Esophagus muscularis mucosa (tissue), 4 donors: ENCODE measurements at regions of chr1 and their contacts with region 1.

Region 1: DNA sequence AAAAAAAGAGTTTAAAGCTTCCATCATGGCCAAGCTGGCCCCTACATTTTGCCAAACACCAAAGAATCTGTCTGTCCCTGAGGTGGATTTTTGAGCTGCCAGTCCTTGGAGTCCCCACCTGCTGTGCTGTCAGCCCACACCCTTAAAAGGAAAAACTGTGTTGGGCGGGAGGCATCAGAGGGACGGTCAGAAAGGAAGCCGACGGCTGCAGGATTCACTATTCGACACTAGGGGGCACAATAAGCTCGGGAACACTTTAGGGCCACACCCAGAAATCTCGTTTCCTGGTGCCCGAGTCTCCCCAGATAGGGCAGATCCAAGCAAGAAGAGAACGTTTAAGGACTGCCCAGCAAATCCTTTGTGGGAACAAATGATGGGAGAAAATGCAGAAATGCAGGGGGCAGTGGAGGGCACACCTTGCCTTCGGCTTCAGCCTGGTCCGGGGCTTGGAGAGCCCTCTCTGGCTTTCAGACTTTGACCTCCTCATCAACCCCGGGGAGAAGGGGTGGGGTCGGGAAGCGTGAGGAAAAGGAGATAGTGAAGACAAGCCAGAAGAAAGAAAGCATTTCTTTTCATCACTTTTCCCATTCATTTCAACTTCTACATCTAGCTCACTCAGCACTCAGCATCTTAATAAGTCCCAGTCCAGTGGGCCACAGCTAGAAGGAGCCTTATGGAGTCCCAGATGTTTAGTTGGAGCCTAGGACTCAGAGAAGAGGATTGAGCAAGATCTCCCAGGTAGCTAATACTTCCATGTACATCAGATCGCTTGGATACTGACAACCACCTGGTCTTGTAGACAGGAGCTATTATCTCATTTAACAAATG is 5.0 kb upstream of the CTTNBP2NL start:
- DNase-seq: peak; percentile 98
- H3K4me3 ChIP-seq: peak overlapping the region; percentile 50 to 59 (median 54)
- H3K27ac ChIP-seq: peak overlapping the region; percentile 78 to 88 (median 84)
- H3K4me1 ChIP-seq: peaks cover 41 to 54% (median 51%) of the 10 kb centered on the region in 4 donors
- H3K27me3 ChIP-seq: no peaks in the 10 kb centered on the region
- CTCF ChIP-seq: peak; percentile 85 to 98 (median 96)
- EP300 ChIP-seq: no peak
- POLR2A ChIP-seq: no peak

Region 2: DNA sequence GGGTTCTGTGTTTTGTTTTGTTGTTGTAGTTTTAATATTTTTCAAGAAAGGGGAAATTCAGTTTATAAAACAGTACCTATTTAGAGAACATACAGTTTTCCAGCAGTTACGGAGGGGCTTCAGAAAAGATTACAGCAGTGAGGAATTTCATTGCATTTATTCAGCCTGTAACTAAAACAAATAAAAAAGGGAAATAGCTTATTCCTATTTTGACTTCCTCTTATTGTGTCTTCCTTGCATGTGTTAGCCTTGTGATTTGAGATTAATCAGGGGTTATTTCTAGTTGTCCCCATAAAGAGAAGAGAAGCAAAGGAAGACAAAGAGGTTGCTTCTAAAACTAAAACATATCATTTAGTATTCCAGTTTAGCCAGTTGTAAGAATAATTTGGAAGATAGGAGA is 40.0 kb after region 1 on chr1:
- intact Hi-C with region 1: no loop called
- DNase-seq: no peak
- H3K4me3 ChIP-seq: no peak overlapping the region
- H3K27ac ChIP-seq: peak overlapping the region; percentile 28 to 42 (median 37)
- H3K4me1 ChIP-seq: peaks cover 8 to 45% (median 17%) of the 10 kb centered on the region in 4 donors
- H3K27me3 ChIP-seq: no peaks in the 10 kb centered on the region
- CTCF ChIP-seq: no peak
- EP300 ChIP-seq: no peak
- POLR2A ChIP-seq: no peak

Region 3: GRCh38 chr1:112466078-112466660 is 75.2 kb after region 1 on chr1:
- intact Hi-C with region 1: loop called (anchors 2 kb)
- DNase-seq: peak; percentile 98
- H3K4me3 ChIP-seq: peak overlapping the region; percentile 47 to 55 (median 49)
- H3K27ac ChIP-seq: peak overlapping the region; percentile 73 to 82 (median 78)
- H3K4me1 ChIP-seq: peaks cover 19 to 43% (median 27%) of the 10 kb centered on the region in 4 donors
- H3K27me3 ChIP-seq: no peaks in the 10 kb centered on the region
- CTCF ChIP-seq: peak; percentile 81 to 91 (median 83)
- EP300 ChIP-seq: no peak
- POLR2A ChIP-seq: no peak

Region 4: DNA sequence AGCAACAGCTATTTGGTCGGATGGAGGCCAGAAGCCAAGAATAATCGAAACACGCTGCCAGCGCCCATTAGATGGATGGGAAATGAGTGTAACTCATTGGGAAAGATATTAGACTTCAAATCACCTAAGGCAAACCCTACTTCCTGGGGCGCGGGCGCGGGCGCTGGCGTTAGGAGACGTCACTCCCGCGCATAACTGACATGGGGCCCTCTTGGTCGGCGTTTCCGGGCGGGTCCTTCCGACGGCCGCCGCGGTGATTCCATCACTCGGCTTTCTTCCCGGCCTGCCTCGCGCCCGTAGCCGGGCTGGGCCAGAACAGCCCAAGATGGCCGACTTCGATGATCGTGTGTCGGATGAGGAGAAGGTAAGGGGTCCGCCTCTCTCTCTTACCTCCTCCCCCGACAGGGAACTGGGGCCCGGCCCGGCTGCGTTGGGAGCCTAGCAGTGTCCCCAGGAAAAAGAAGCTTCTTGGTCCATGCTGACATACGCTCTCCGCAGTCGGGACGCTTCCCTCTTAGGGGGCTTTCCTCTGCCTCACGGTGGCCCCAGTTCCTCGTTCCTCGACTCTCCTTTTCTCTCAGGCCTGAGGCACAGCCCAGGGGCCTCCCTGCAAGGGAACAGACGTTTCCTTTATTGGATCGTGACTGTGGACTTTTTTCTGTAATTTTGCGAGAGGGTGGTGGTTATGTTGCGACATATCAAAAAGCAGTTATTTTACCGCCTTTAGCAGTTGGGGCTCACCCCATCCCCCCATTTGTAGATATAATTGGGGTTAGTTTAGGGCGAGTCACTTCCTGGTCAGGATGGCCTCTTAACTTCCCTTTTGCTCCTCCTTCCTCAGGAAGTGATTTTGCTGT is 228.8 kb after region 1 on chr1 and contains the start of gene CAPZA1:
- intact Hi-C with region 1: loop called (anchors 10 kb)
- DNase-seq: peak; percentile 96
- H3K4me3 ChIP-seq: peak within 1 kb of the TSS; percentile 74 to 95 (median 79)
- H3K27ac ChIP-seq: peak within 1 kb of the TSS; percentile 88 to 97 (median 94)
- H3K4me1 ChIP-seq: peaks cover 41 to 58% (median 54%) of the 10 kb centered on the region in 4 donors
- H3K27me3 ChIP-seq: no peaks in the 10 kb centered on the region
- CTCF ChIP-seq: no peak
- EP300 ChIP-seq: no peak
- POLR2A ChIP-seq: peak; percentile 86
- total RNA-seq, gene CAPZA1: 61.9 to 77.5 (median 69.1) TPM